Activated B cell treated with CpG ODN at 0.5 μM for 24 hours (primary cell): ENCODE measurements at regions of chr18 and their contacts with region 1.

Region 1: GRCh38 chr18:3245853-3246634 is 1.6 kb upstream of the MYL12A start:
- DNase-seq: peak; percentile 65
- ATAC-seq: peak; percentile 62
- H3K4me3 Mint-ChIP-seq: peak overlapping the region; percentile 94
- H3K27ac Mint-ChIP-seq: peak overlapping the region; percentile 99
- H3K4me1 Mint-ChIP-seq: peaks cover 44% of the 10 kb centered on the region
- H3K27me3 Mint-ChIP-seq: no peaks in the 10 kb centered on the region
- CTCF ChIP-seq: peak; percentile 54

Region 2: GRCh38 chr18:2846636-2847364 is 399.2 kb before region 1 on chr18 and contains the start of gene EMILIN2:
- CTCF ChIA-PET with region 1: no interaction called
- POLR2A ChIA-PET with region 1: interaction called, 19 read pairs
- intact Hi-C with region 1: loop called (anchors 1 kb)
- DNase-seq: peak; percentile 87
- ATAC-seq: peak; percentile 81
- H3K4me3 Mint-ChIP-seq: peak within 1 kb of the TSS; percentile 96
- H3K27ac Mint-ChIP-seq: peak within 1 kb of the TSS; percentile 94
- H3K4me1 Mint-ChIP-seq: peaks cover 52% of the 10 kb centered on the region
- H3K27me3 Mint-ChIP-seq: peaks cover 8% of the 10 kb centered on the region
- CTCF ChIP-seq: no peak
- total RNA-seq, gene EMILIN2: 73.0 and 80.9 TPM in 2 replicates

Region 3: DNA sequence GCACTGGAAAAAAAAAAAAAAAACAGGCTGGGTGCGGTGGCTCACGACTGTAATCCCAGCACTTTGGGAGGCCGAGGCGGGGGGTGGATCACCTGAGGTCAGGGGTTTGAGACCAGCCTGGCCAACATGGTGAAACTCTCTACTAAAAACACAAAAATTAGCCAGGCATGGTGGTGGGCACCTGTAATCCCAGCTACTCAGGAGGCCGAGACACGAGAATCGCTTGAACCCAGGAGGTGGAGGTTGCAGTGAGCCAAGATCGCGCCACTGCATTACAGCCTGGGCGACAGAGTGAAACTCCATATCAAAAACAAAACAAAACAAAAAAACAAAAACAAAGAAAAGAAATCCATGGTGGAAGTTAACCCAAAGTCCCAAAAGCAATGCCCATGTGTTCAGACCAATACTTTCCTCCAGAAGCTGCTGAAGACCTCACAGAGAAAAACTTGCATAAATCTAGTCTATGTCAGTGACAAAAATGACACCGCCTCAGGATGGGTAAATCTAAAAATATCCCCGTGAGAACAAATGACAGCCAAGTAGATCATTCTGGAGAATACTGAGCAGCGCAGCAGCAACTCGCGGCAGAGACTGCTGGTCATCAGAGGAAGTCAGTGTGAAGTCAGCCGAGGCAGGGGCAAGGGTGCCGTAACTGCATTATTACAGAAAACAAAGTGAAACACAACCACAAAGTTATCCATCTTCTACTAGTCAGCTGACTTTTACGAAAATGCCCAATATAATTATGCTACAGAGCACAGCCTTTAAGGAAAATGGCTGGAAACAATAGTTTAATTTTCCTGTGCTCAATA is 274.1 kb before region 1 on chr18:
- CTCF ChIA-PET with region 1: interaction called, 4 read pairs
- POLR2A ChIA-PET with region 1: interaction called, 25 read pairs
- intact Hi-C with region 1: loop called (anchors 1 kb)
- DNase-seq: peak; percentile 53
- ATAC-seq: peak; percentile 80
- H3K4me3 Mint-ChIP-seq: peak overlapping the region; percentile 79
- H3K27ac Mint-ChIP-seq: peak overlapping the region; percentile 94
- H3K4me1 Mint-ChIP-seq: peaks cover 82% of the 10 kb centered on the region
- H3K27me3 Mint-ChIP-seq: no peaks in the 10 kb centered on the region
- CTCF ChIP-seq: no peak

Region 4: DNA sequence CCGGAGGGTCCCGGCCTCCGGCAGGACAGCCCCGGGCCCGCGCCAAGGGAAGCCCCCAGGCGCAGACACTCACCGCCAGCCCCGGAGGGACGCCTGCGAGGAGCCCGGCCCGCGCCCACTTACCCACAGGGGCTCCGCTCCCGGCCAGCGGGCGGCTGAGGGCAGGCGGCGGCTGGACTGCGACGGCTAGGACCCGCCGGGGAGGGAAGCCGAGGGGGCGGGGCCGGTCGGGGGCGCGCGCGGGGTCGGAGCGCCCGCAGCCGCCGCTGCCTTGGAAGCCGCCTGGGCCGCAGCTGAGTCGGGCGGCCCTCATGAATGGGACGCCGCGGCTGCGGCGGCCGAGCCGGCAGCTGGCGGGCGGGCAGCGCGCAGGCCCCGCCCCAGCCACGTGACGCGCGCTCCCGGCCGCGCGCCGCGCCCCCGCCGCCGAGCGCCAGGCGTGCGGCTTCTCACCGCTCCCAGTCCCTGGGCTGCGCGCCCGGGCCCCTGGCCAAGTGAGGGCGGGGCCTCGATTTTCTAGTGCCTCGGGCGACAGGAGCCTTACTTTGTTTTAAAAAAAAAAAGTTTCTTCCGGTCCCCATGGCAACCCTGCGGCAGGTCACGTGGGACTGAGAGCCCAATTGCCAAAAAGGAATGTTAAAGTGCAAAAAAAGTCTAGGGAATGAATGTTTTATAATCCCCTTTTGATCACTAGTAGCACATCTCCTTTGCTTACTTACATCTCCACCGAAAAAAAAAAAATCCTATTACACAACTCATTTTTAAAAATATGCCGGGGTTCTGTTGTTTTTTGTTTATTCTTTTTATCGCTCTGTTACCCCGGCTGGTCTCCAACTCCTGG is 232.9 kb before region 1 on chr18 and contains the start of gene LPIN2:
- CTCF ChIA-PET with region 1: interaction called, 5 read pairs
- POLR2A ChIA-PET with region 1: interaction called, 5 read pairs
- intact Hi-C with region 1: loop called (anchors 1 kb)
- DNase-seq: peak; percentile 91
- ATAC-seq: peak; percentile 86
- H3K4me3 Mint-ChIP-seq: peak within 1 kb of the TSS; percentile 95
- H3K27ac Mint-ChIP-seq: peak within 1 kb of the TSS; percentile 88
- H3K4me1 Mint-ChIP-seq: peaks cover 59% of the 10 kb centered on the region
- H3K27me3 Mint-ChIP-seq: no peaks in the 10 kb centered on the region
- CTCF ChIP-seq: no peak
- total RNA-seq, gene LPIN2: 21.8 and 24.4 TPM in 2 replicates

Region 5: GRCh38 chr18:3151399-3152264 is 94.4 kb before region 1 on chr18:
- CTCF ChIA-PET with region 1: interaction called, 67 read pairs
- POLR2A ChIA-PET with region 1: interaction called, 18 read pairs
- intact Hi-C with region 1: loop called (anchors 1 kb)
- DNase-seq: no peak
- ATAC-seq: no peak
- H3K4me3 Mint-ChIP-seq: no peak overlapping the region
- H3K27ac Mint-ChIP-seq: peak overlapping the region; percentile 36
- H3K4me1 Mint-ChIP-seq: peaks cover 2% of the 10 kb centered on the region
- H3K27me3 Mint-ChIP-seq: no peaks in the 10 kb centered on the region
- CTCF ChIP-seq: peak; percentile 99

Region 6: DNA sequence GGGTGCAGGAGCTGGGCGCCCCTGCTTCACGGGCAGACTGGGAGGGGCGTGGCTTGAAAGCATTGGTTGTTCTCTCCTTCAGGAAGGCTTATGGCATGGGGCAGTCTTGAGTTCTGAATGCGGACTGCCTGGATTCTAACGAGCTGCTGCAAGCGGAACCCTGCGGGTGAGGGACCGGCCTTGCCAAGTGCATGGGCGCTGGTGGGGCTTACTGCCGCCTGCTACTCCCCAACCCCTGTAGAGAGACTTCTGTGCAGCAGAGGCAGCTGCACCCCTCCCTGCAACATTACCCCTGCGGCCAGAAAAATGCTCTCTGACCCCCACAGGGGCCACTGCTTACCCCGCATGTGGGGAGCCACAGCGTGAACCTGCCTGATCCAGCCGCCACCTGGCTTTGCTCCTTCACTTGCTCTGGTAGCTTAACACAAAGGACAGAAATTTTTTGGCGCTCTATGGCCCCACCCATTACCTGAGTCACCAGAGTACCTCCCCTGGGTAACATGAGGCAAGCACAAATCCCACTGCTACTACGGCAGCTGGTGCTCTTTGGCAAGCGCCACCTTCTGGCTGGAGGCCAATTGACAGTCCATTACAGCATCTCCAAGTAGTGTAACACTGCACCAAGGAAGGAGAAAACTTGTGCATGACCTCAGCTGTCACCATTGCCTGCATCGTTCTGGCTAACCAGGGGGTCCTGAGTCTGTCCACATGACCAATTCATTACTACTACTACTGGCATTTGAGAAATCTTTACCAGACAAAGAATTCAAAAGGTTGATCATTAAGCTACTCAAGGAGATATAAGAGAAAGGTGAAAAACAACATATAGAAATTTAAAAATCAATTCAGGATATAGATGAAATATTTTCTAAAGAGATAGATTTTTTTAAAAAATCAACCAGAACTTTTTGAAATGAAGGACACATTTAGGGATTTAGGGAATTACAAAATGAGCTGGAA is 51.3 kb after region 1 on chr18:
- CTCF ChIA-PET with region 1: no interaction called
- POLR2A ChIA-PET with region 1: interaction called, 10 read pairs
- intact Hi-C with region 1: loop called (anchors 1 kb)
- DNase-seq: peak; percentile 82
- ATAC-seq: peak; percentile 99
- H3K4me3 Mint-ChIP-seq: peak overlapping the region; percentile 95
- H3K27ac Mint-ChIP-seq: peak overlapping the region; percentile 83
- H3K4me1 Mint-ChIP-seq: peaks cover 11% of the 10 kb centered on the region
- H3K27me3 Mint-ChIP-seq: peaks cover 6% of the 10 kb centered on the region
- CTCF ChIP-seq: no peak

Region 7: DNA sequence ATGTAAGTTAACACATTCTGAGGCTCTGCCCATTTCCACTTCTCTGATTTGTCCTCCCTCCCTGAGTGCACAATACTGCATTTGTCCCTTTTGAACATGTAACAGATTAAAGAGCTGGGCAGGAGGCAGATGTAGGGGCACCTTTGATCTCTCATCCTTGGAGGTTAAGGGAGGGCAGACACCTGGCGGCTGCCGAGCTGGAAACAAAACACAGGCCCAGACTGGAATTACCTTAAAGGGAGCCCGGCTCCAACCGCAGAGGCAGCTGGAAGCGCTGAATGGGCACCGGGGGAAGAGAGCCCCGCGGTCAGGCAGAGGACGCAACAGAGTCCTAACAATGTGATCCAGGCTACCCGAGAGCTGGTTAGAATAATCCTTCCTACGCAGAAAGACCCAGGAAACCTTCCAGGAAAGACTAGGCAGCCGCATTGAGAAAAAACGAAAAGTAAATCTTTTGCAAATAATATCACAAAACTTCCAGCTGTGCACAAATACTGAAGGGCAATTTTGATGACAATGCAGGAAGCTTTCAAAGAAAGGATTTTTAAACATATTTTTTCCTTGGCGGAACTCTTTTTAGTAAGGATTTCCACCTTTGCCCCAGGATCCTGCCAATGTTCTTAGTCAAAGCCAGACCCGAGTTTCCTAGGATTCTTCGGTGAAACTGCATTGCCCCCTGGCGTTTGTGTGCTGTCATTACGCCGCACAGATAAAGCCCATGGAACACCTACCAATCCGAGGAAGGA is 419.9 kb after region 1 on chr18:
- CTCF ChIA-PET with region 1: interaction called, 28 read pairs
- POLR2A ChIA-PET with region 1: interaction called, 6 read pairs
- intact Hi-C with region 1: loop called (anchors 1 kb)
- DNase-seq: peak; percentile 51
- ATAC-seq: peak; percentile 84
- H3K4me3 Mint-ChIP-seq: no peak overlapping the region
- H3K27ac Mint-ChIP-seq: no peak overlapping the region
- H3K4me1 Mint-ChIP-seq: peaks cover 21% of the 10 kb centered on the region
- H3K27me3 Mint-ChIP-seq: no peaks in the 10 kb centered on the region
- CTCF ChIP-seq: peak; percentile 83